ENCODE measurements at regions of chr2 and their contacts with region 1.

Region 1: GRCh38 chr2:135052042-135052876 is at the start of gene RAB3GAP1:
- H3K4me3 Mint-ChIP-seq: peak within 1 kb of the TSS; percentile 96
- H3K27ac Mint-ChIP-seq: peak within 1 kb of the TSS; percentile 100
- H3K4me1 Mint-ChIP-seq: peaks cover 28% of the 10 kb centered on the region
- H3K27me3 Mint-ChIP-seq: no peaks in the 10 kb centered on the region

Region 2: GRCh38 chr2:134943540-134943939 is 108.7 kb before region 1 on chr2:
- intact Hi-C with region 1: loop called (anchors 5 kb)
- H3K4me3 Mint-ChIP-seq: no peak overlapping the region
- H3K27ac Mint-ChIP-seq: peak overlapping the region; percentile 79
- H3K4me1 Mint-ChIP-seq: peaks cover 19% of the 10 kb centered on the region
- H3K27me3 Mint-ChIP-seq: no peaks in the 10 kb centered on the region

Region 3: GRCh38 chr2:135119582-135119981 is 67.3 kb after region 1 on chr2:
- intact Hi-C with region 1: loop called (anchors 5 kb)
- H3K4me3 Mint-ChIP-seq: no peak overlapping the region
- H3K27ac Mint-ChIP-seq: no peak overlapping the region
- H3K4me1 Mint-ChIP-seq: no peaks in the 10 kb centered on the region
- H3K27me3 Mint-ChIP-seq: no peaks in the 10 kb centered on the region

Region 4: DNA sequence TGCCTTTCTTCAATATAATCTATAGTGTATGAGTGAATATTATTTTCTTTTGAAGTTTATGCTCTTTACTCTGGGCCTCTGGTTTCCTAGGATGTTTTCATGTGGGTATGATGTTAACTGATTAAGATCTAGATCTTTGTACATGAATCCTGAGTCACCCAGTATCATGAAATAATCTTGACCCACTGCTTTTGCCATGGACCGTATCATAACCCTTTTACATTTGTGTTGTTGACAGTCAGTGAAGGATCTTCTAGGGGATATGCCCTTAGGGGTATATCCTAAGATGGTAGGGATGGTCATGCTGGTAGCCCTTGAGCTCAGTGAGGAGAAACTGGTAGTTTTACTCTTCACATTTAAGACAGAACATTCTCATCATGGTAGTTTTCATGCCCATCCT is 100.1 kb after region 1 on chr2:
- intact Hi-C with region 1: no loop called
- H3K4me3 Mint-ChIP-seq: no peak overlapping the region
- H3K27ac Mint-ChIP-seq: no peak overlapping the region
- H3K4me1 Mint-ChIP-seq: no peaks in the 10 kb centered on the region
- H3K27me3 Mint-ChIP-seq: no peaks in the 10 kb centered on the region

Region 5: GRCh38 chr2:135531231-135532228 is 479.3 kb after region 1 on chr2 and contains the start of gene R3HDM1:
- intact Hi-C with region 1: loop called (anchors 2 kb)
- H3K4me3 Mint-ChIP-seq: no peak within 1 kb of the TSS
- H3K27ac Mint-ChIP-seq: no peak within 1 kb of the TSS
- H3K4me1 Mint-ChIP-seq: peaks cover 5% of the 10 kb centered on the region
- H3K27me3 Mint-ChIP-seq: no peaks in the 10 kb centered on the region